Right cardiac atrium (tissue), 5 donors: ENCODE measurements at regions of chr2 and their contacts with region 1.

Region 1: GRCh38 chr2:231227309-231228162 is 29.1 kb downstream of the ARMC9 start:
- DNase-seq: peak in 2 of 3 donors; percentile 47 to 70
- ATAC-seq: peak; percentile 95 to 96
- H3K4me3 ChIP-seq: no peak overlapping the region
- H3K27ac ChIP-seq: no peak overlapping the region
- H3K4me1 ChIP-seq: no peaks in the 10 kb centered on the region
- H3K27me3 ChIP-seq: no peaks in the 10 kb centered on the region

Region 2: DNA sequence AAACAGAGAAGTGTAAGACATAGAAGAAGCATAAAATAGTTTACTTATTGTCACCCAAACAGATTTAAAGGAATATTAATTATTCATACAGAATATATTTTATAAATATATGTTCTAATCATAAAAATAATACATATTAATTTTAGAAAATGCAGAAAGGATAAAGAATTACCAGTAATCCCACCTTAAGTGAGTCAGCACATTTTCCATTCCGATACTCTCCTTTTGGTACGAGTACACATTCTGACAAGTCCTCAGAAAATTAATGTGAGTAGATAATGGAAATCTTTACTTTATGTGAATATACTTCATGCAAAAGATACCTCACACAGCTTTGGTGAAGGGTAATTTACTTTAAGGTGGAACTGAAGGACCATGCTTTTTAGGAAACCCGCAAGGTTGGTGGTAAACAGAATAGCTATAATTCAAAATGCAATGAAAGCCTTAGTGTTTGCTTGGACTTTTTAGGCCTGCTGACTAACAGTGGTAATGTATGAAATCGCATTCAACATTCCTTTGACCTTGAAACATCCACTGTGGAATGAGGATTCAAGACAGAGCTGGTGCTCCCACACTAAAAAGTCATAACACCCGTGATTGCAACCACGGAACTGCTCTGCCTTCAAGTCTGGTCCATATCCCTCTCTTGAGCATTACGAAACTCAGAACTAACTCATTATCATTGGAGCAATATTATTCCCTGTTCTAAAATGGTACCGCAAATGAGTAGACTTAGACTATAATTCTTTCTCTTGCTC is 74.6 kb before region 1 on chr2:
- intact Hi-C with region 1: no loop called
- DNase-seq: no peak
- ATAC-seq: no peak
- H3K4me3 ChIP-seq: no peak overlapping the region
- H3K27ac ChIP-seq: no peak overlapping the region
- H3K4me1 ChIP-seq: no peaks in the 10 kb centered on the region
- H3K27me3 ChIP-seq: no peaks in the 10 kb centered on the region

Region 3: DNA sequence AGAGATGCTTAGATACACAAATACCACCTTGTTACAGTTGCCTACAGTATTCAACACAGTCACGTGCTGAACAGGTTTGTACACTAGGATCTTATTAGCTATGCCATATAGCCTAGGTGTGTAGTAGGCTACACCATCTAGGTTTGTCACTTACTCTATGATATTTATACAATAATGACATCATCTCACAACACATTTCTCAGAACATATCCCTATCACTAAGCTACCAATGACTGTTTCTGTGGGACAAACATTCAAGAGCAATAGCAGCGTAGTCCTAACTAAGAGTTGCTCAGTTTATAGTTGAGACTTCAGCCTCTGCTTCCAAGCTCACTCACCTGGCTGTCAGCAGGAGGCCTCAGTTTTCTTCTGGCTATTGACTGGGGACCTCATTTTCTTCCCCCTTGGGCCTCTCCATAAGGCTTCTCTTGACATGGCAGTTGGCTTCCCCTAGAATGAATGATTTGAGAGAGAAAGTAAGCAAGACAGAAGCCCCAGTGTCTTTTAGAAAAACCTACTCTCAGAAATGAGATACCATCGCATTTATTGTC is 56.7 kb after region 1 on chr2:
- intact Hi-C with region 1: no loop called
- DNase-seq: no peak
- ATAC-seq: no peak
- H3K4me3 ChIP-seq: no peak overlapping the region
- H3K27ac ChIP-seq: no peak overlapping the region
- H3K4me1 ChIP-seq: no peaks in the 10 kb centered on the region
- H3K27me3 ChIP-seq: no peaks in the 10 kb centered on the region

Region 4: GRCh38 chr2:231411831-231412617 is 184.5 kb after region 1 on chr2:
- intact Hi-C with region 1: loop called (anchors 5 kb)
- DNase-seq: peak; percentile 88 to 94 (median 94)
- ATAC-seq: peak; percentile 99
- H3K4me3 ChIP-seq: peak overlapping the region; percentile 51
- H3K27ac ChIP-seq: no peak overlapping the region
- H3K4me1 ChIP-seq: no peaks in the 10 kb centered on the region
- H3K27me3 ChIP-seq: no peaks in the 10 kb centered on the region

Region 5: DNA sequence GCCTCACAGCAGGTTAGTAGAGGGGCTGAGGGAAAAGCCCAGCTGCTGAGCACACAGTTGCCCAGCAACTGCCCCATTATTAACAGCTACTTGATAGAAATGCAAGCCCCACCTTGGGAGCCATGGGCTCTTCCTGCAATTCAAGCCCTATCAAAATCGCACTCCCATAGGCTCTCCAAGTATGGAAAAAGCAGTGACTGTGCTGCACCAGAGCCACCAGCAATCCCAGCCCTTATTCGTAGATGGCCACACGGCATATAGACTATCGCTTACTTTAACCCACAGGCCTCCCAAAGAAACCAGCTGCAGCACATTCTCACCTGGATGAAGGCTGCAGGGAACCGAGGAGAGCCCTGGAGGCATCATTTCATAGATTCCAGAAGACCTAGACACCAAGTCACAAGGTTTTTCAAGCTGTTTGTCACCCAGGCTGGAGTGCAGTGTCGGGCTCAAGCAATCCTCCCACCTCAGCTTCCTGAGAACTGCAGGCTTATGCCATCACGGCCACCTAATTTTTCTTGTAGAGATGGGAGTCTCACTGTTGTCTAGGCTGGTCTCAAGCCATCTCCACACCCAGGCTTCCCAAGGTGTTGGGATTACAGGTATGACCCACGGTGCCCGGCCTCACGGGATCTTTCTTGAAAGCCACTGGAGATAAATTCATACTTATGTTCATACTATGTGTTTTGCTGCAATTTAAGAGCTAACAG is 225.4 kb after region 1 on chr2:
- intact Hi-C with region 1: loop called in 1 of 4 experiments (anchors 5 kb)
- DNase-seq: no peak
- ATAC-seq: peak; percentile 22 to 31
- H3K4me3 ChIP-seq: no peak overlapping the region
- H3K27ac ChIP-seq: no peak overlapping the region
- H3K4me1 ChIP-seq: no peaks in the 10 kb centered on the region
- H3K27me3 ChIP-seq: no peaks in the 10 kb centered on the region